PC-3 (cell line): ENCODE measurements at regions of chr2 and their contacts with region 1.

Region 1: DNA sequence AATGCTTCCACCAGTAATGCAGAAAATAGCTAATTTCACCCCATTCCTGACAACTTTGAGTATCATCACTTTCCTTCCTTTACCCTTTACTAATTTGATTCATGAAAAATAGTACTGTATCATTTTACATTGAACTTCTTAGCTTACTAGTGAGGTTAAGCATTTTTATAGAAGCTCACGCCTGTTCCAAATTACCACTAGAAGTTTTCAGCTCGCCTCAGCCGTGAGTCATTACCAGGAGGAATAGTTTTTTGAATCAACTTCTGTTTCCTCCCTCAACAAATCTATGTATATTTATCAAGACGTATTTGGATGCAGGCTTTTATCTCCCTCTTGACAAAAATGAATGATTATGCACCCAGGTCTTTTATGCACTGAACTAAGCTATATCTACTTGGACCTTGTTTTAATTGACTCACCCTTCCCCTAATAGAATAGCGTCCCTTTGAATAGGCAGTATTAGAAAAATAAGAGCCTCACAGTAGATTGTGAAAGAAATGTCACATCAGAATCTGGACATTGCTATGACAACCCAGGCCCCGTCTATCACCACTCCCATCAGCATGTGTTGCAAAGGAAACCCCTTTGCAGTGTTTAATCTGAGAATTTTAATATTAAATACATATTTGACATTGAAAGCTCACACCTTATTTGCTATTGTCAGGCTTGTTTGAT is 207.4 kb upstream of the NRP2 start:
- DNase-seq: peak; percentile 30
- ATAC-seq: peak; percentile 52; the same call in 1 of the 2 replicates
- H3K4me3 ChIP-seq: no peak overlapping the region
- H3K27ac ChIP-seq: no peak overlapping the region
- H3K4me1 ChIP-seq: 0 out of 2 replicates have a peak, but pooled peaks cover 8% of the 10 kb centered on the region
- H3K27me3 ChIP-seq: no peaks in the 10 kb centered on the region
- CTCF ChIP-seq: no peak

Region 2: DNA sequence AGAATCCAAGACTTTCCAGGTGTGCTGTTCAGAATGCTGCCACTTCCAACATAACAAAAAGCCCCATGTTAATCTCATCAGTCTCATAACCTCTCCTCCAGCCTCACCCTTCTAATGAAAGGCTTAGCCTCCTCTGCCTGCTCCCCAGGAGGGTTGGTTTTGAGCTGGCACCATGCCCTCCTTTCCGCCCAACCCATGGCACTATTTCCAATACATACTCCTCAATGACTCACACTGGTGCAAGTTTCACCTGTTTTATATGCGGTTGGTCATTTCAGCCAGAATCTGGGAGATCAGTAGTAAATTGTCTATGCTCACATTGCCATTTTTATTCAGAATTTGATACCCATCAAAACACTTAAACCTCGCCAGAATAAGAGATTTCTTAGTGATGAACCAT is 49.8 kb after region 1 on chr2:
- CTCF ChIA-PET with region 1: no interaction called
- POLR2A ChIA-PET with region 1: no interaction called
- intact Hi-C with region 1: loop called (anchors 1 kb)
- DNase-seq: peak; percentile 89
- ATAC-seq: peak; percentile 94
- H3K4me3 ChIP-seq: no peak overlapping the region
- H3K27ac ChIP-seq: peak overlapping the region; percentile 28; the same call in 1 of the 2 replicates
- H3K4me1 ChIP-seq: peaks cover 24% of the 10 kb centered on the region
- H3K27me3 ChIP-seq: no peaks in the 10 kb centered on the region
- CTCF ChIP-seq: no peak